ENCODE measurements at regions of chr18 and their contacts with region 1.

Region 1: DNA sequence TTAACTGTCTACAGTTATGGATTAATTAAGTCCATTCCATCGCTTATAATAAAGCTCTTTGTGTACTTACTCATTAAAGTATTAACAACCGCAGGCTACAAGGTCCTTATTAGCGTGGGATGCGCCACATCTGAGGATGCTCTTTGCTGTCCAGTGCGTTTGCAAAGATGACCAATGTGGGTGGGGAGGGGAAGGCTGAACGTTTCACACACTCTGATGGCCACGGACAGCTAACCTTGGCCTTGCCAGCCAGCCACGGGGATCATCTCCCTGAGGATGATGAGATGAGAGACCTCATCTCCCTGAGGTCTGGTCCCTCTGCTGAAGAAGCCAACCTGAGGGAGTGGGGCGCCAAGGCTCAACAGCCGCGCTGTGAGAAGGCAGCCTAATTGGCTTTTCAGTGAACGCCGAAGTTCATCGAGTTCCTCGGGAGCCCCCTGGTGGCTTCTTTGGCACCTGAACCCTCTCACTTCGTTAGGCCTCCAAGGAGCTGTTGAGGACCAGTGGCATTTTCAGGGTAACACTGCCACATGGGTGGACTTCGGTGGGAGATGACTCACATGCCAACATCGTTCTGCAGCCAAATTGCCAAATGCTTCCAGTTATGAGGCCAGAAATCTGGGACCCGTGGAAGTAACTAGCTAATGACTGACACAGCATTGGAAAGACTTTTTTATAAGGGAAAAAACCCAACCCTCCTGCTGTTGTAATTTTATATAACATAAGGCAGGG is 69.3 kb upstream of the SEC11C start:
- DNase-seq: peak; percentile 76
- H3K4me3 Mint-ChIP-seq: no peak overlapping the region
- H3K27ac Mint-ChIP-seq: no peak overlapping the region
- H3K4me1 Mint-ChIP-seq: no peaks in the 10 kb centered on the region
- H3K27me3 Mint-ChIP-seq: no peaks in the 10 kb centered on the region

Region 2: GRCh38 chr18:58781627-58782194 is 288.6 kb before region 1 on chr18:
- CTCF ChIA-PET with region 1: interaction called, 16 read pairs
- POLR2A ChIA-PET with region 1: no interaction called
- DNase-seq: peak; percentile 71
- H3K4me3 Mint-ChIP-seq: no peak overlapping the region
- H3K27ac Mint-ChIP-seq: no peak overlapping the region
- H3K4me1 Mint-ChIP-seq: peaks cover 7% of the 10 kb centered on the region
- H3K27me3 Mint-ChIP-seq: peaks cover 5% of the 10 kb centered on the region

Region 3: GRCh38 chr18:59085797-59086196 is 15.4 kb after region 1 on chr18:
- CTCF ChIA-PET with region 1: interaction called, 19 read pairs
- POLR2A ChIA-PET with region 1: no interaction called
- DNase-seq: no peak
- H3K4me3 Mint-ChIP-seq: no peak overlapping the region
- H3K27ac Mint-ChIP-seq: no peak overlapping the region
- H3K4me1 Mint-ChIP-seq: peaks cover 4% of the 10 kb centered on the region
- H3K27me3 Mint-ChIP-seq: peaks cover 18% of the 10 kb centered on the region

Region 4: GRCh38 chr18:59402432-59403090 is 332.2 kb after region 1 on chr18:
- CTCF ChIA-PET with region 1: no interaction called
- POLR2A ChIA-PET with region 1: no interaction called
- DNase-seq: peak; percentile 75
- H3K4me3 Mint-ChIP-seq: no peak overlapping the region
- H3K27ac Mint-ChIP-seq: no peak overlapping the region
- H3K4me1 Mint-ChIP-seq: no peaks in the 10 kb centered on the region
- H3K27me3 Mint-ChIP-seq: peaks cover 5% of the 10 kb centered on the region

Measured in activated CD4-positive, alpha-beta memory T cell treated with anti-CD3 and anti-CD28 coated beads, Interleukin-2, amount 10 ng/mL, durations not matched to agents 7 days and 5 days (primary cell).